Activated naive CD4-positive, alpha-beta T cell treated with anti-CD3 and anti-CD28 coated beads for 36 hours (primary cell): ENCODE measurements at regions of chr10 and their contacts with region 1.

Region 1: GRCh38 chr10:18238870-18239485 is 98.8 kb downstream of the CACNB2 start:
- DNase-seq: peak; percentile 10
- H3K4me3 Mint-ChIP-seq: no peak overlapping the region
- H3K27ac Mint-ChIP-seq: no peak overlapping the region
- H3K4me1 Mint-ChIP-seq: no peaks in the 10 kb centered on the region
- H3K27me3 Mint-ChIP-seq: peaks cover 5% of the 10 kb centered on the region

Region 2: DNA sequence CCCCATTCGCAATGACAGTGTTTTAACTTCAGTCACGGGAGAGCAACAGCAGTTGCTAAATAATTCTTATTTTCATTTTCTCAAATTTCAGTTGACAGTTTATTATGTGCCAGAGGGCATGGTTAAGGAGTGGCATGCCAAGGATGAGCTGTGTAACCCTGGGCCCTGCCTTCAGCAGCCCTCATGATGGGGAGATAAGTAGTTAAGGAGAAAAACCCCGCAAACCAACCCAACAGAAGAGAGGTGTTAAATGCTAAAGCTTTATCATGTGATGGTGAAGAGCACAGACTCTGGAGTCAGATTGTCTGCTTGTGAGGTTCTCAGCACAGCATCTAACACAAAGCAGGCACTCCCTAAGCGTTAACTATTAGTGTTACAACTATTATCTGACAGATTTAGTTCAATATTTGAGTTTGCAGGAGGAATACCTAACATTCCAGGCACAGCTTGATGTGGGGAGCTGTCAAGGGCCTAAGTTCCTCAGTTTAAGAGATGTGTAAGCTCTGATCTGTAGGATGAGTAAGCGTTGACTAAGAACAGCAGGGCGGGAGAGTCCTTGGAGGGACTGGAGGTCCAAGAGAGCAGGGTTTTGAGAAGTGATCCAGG is 565.4 kb before region 1 on chr10:
- CTCF ChIA-PET with region 1: no interaction called
- intact Hi-C with region 1: no loop called
- DNase-seq: no peak
- H3K4me3 Mint-ChIP-seq: no peak overlapping the region
- H3K27ac Mint-ChIP-seq: no peak overlapping the region
- H3K4me1 Mint-ChIP-seq: peaks cover 49% of the 10 kb centered on the region
- H3K27me3 Mint-ChIP-seq: no peaks in the 10 kb centered on the region

Region 3: GRCh38 chr10:17737027-17737965 is 501.7 kb before region 1 on chr10:
- CTCF ChIA-PET with region 1: no interaction called
- intact Hi-C with region 1: loop called (anchors 2 kb)
- DNase-seq: no peak
- H3K4me3 Mint-ChIP-seq: no peak overlapping the region
- H3K27ac Mint-ChIP-seq: no peak overlapping the region
- H3K4me1 Mint-ChIP-seq: peaks cover 2% of the 10 kb centered on the region
- H3K27me3 Mint-ChIP-seq: no peaks in the 10 kb centered on the region

Region 4: DNA sequence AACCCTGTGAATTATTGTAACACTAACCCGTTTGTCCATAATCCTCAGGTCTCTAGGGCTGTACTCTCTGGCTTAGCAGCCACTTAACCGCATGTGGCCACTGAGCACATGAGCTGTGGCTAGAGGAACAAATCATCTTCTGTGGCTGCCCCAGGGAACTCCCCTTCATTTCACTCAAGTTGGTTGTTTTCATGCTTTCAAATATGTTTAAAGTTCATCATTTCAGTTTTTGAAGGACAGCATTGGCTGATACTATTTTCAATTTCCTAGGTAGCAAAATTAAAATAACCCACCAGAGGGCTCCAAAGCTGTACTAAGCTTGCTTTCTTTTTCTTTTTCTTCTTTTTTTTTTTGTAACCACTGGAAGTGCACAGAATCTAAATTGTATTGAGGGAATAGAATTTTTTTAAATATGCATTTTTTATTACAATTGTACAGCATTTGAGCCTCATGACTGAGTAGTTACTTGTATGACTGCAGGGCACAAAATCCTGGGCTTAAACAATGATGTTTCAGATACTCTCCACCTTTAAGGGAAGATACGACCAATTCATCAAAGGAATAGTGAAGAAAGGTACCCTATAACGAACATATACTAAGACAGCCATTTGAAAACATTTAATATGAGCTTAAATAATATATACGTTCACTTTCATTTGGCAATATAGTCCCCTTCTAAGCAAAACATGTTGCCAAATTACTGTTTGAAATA is 391.2 kb before region 1 on chr10:
- CTCF ChIA-PET with region 1: no interaction called
- intact Hi-C with region 1: loop called (anchors 5 kb)
- DNase-seq: no peak
- H3K4me3 Mint-ChIP-seq: no peak overlapping the region
- H3K27ac Mint-ChIP-seq: no peak overlapping the region
- H3K4me1 Mint-ChIP-seq: no peaks in the 10 kb centered on the region
- H3K27me3 Mint-ChIP-seq: peaks cover 6% of the 10 kb centered on the region